ENCODE measurements at regions of chr2 and their contacts with region 1.

Region 1: GRCh38 chr2:230430957-230431910 is 15.2 kb downstream of the SP100 start:
- DNase-seq: no peak
- ATAC-seq: peak; percentile 65
- H3K4me3 ChIP-seq: peak overlapping the region in 1 of 5 experiments; percentile 27
- H3K4me3 Mint-ChIP-seq: peak overlapping the region; percentile 59
- H3K27ac ChIP-seq: peak overlapping the region; percentile 54 to 87
- H3K27ac Mint-ChIP-seq: peak overlapping the region; percentile 86
- H3K4me1 ChIP-seq: peaks cover 26 to 56% of the 10 kb centered on the region in 2 donors
- H3K4me1 Mint-ChIP-seq: peaks cover 62% of the 10 kb centered on the region
- H3K27me3 ChIP-seq: no peaks in the 10 kb centered on the region
- H3K27me3 Mint-ChIP-seq: no peaks in the 10 kb centered on the region
- CTCF ChIP-seq: no peak

Region 2: DNA sequence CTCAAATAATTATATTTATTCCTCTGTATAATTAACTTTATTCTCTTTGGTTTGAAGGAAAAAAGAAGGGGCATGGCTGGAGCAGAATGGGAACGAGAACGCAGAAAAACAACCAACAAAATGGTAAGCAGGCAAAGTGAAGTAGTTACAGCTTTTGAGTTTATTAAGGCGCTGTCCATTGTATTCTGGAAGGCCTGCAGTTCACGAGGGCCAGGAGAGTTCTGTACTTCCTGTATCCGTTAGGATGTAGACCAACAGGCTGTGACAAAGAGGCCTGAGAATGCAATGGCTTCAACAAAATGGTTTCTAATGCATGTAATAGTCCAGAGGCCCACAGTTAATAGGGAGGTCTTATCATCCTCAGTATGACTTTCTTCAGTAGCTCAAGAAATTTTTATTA is 47.8 kb before region 1 on chr2:
- CTCF ChIA-PET with region 1: no interaction called
- POLR2A ChIA-PET with region 1: no interaction called
- intact Hi-C with region 1: no loop called
- DNase-seq: no peak
- ATAC-seq: no peak
- H3K4me3 ChIP-seq: no peak overlapping the region
- H3K4me3 Mint-ChIP-seq: no peak overlapping the region
- H3K27ac ChIP-seq: no peak overlapping the region
- H3K27ac Mint-ChIP-seq: no peak overlapping the region
- H3K4me1 ChIP-seq: no peaks in the 10 kb centered on the region
- H3K4me1 Mint-ChIP-seq: peaks cover 3% of the 10 kb centered on the region
- H3K27me3 ChIP-seq: no peaks in the 10 kb centered on the region
- H3K27me3 Mint-ChIP-seq: no peaks in the 10 kb centered on the region
- CTCF ChIP-seq: no peak

Region 3: DNA sequence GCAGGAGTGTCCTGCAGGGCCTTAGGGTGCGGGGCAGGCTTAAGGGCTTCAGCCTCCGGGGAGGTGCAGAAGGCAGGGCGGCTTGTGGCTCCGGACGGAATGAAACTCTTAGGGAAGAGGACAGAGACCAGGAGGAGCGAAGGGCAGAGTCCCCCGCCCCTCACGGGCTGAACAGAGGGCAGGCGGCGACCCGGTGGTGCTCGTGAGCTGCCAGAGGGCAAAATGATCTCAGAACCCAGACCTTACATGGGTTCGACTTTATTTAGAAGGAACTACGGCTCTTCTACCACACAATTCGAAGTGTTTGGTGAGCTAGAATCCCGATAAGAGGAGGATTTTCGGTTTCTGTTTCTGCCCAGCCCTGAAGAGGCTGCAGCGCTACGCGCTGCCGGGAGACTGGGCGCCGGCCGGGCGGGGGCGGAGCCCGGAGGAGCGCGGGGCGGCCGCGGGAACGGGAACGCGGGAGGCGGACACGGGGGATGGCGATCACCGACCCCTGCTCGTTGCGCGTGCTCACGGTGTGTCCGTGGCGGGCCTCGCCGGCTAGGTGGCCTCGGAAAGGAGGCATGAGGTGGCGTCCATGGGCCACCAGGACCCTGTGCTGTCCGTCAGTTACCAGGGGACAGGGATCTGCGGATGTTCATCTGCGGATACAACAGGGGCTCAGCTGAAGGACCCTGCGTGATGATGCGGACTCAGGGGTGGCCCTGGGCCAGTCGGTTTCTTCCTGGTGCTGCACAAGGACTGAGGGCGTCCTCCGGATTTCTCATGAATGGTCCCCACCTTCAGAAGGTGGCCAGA is 19.5 kb before region 1 on chr2:
- CTCF ChIA-PET with region 1: interaction called, 3 read pairs
- POLR2A ChIA-PET with region 1: interaction called, 3 read pairs
- intact Hi-C with region 1: loop called (anchors 2 kb)
- DNase-seq: peak; percentile 81
- ATAC-seq: peak; percentile 62
- H3K4me3 ChIP-seq: peak overlapping the region; percentile 69 to 92 (median 88)
- H3K4me3 Mint-ChIP-seq: peak overlapping the region; percentile 98
- H3K27ac ChIP-seq: peak overlapping the region; percentile 88 to 92
- H3K27ac Mint-ChIP-seq: peak overlapping the region; percentile 99
- H3K4me1 ChIP-seq: peaks cover 54 to 63% of the 10 kb centered on the region in 2 donors
- H3K4me1 Mint-ChIP-seq: peaks cover 72% of the 10 kb centered on the region
- H3K27me3 ChIP-seq: no peaks in the 10 kb centered on the region
- H3K27me3 Mint-ChIP-seq: no peaks in the 10 kb centered on the region
- CTCF ChIP-seq: no peak